AG04449 (cell line): ENCODE measurements at regions of chr2 and their contacts with region 1.

Region 1: DNA sequence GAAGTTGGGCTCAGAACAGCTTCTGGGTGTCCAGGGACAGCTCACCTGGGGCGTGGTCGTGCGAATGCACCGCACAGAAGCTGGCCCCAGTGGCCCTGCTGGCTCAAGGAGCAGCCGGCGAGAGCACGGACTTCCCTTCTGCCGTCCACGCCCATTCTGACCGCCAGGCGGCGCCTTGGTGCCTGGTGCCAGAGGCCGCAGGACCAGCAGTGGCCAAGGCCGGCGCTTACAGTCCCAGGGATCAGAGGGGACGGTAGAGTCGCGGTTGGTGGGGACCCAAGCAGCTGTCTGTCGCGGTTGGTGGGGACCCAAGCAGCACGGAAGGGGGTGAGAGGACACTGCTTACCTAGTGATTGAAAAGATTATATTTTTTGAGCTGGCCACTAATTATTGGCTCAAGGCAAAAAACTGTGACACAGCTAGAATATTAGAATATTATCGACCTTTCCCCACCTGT is 25.7 kb downstream of the NPPC start:
- DNase-seq: no peak
- H3K4me3 ChIP-seq: no peak overlapping the region
- CTCF ChIP-seq: peak; percentile 97

Region 2: DNA sequence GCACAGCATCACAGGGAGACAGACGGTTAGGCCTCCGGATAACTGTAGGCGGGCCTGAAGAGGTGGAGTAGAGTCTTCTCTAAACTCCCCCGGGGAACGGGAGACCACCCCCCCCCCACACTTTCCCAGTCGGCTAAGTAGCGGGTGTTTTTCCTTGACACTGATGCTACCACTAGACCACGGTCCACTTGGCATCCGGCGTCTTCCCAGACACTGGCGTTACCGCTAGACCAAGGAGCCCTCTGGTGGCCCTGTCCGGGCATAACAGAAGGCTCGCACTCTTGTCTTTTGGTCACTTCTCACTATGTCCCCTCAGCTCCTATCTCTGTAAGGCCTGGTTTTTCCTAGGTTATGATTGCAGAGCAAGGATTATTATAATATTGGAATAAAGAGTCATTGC is 410.5 kb before region 1 on chr2:
- CTCF ChIA-PET with region 1: no interaction called
- POLR2A ChIA-PET with region 1: no interaction called
- DNase-seq: no peak
- H3K4me3 ChIP-seq: no peak overlapping the region
- CTCF ChIP-seq: no peak

Region 3: GRCh38 chr2:231701456-231702373 is 198.8 kb before region 1 on chr2:
- CTCF ChIA-PET with region 1: no interaction called
- POLR2A ChIA-PET with region 1: no interaction called
- DNase-seq: no peak
- H3K4me3 ChIP-seq: no peak overlapping the region
- CTCF ChIP-seq: no peak

Region 4: DNA sequence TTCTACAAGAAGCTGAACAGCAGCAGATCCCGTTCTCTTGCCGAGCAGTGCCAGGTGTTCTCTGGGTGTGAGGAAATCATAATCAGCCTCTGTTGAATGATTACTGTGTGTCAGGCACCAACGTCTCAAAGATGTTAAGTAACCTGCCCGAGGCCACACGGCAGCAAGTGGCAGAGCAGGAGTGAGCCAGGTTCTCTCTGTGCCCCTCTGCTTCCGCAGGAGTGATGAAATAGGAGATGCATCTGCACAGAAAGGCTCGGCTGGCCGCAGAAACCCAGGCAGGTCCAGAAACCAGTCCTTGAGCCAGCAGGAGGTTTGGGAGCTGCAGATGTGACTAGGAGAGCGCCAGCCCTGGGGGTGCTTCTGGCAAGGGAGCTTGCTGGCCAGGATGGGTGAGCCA is 45.8 kb before region 1 on chr2:
- CTCF ChIA-PET with region 1: interaction called, 18 read pairs
- POLR2A ChIA-PET with region 1: no interaction called
- DNase-seq: no peak
- H3K4me3 ChIP-seq: no peak overlapping the region
- CTCF ChIP-seq: no peak

Region 5: DNA sequence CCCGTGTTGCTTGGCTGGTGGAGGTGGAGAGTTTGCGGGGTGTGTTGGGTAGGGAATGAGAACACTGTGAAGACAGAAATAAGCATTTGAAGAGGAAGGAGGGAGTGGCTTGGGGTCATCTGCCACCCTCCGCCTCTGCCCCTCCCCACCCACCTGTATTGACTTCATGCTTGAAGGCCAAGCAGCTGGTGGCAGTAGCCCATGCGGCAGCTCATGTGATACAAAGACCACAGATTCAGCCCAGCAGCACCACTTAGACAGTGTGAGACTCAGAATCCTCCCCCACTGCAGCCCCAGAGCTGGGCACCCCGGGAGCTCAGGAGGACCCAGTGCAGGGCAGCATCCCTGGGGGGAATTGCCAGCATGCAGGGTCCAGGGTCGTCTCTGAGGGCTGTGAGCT is 10.3 kb after region 1 on chr2:
- CTCF ChIA-PET with region 1: interaction called, 12 read pairs
- POLR2A ChIA-PET with region 1: no interaction called
- DNase-seq: no peak
- H3K4me3 ChIP-seq: no peak overlapping the region
- CTCF ChIP-seq: no peak

Region 6: DNA sequence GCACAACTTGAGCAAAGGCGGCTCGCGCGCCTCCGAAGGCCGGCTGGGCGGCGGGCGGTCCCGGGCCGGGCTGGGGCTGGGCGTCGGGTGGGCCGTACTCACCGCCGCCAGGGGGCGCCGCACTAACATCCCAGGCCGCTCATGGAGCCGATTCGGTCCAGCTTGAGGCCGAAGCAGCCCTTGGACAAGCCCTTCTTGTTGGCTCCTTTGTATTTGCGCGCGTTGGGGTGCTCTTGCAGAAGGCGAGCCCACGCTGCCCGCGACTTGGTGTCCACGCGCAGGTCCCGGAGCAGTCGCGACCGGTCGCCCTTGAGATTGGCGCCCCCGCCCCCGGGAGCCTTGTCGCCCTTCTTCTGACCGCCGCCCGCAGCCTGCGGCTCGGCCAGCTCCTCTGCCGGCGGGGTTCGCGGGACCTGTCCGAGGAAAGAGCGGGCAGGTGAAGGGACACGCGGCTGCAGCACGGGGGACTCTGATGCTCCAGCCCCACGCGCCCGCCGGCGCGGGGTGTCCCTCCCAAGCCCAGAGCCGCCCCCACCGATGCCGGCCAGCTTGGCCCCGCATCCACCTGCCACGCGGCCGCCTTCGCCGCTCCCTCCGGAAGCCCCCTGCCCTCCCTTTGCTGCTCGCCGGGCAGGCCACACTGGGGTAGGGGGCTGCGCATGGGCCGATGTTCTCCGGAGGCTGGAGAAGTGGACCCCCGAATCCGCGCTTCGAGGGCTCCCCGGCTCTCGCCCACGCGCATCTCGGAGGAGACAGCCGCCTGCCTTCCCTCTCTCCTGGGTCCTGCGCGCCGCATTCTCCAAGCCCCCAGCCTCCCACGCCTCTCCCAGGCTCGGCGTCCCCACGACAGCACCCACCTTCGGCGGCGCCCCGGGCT is 25.0 kb after region 1 on chr2:
- CTCF ChIA-PET with region 1: interaction called, 64 read pairs
- POLR2A ChIA-PET with region 1: no interaction called
- DNase-seq: peak; percentile 28
- H3K4me3 ChIP-seq: peak overlapping the region; percentile 46
- CTCF ChIP-seq: peak; percentile 87

Region 7: GRCh38 chr2:232327105-232328041 is 426.9 kb after region 1 on chr2:
- CTCF ChIA-PET with region 1: interaction called, 222 read pairs
- POLR2A ChIA-PET with region 1: no interaction called
- DNase-seq: no peak
- H3K4me3 ChIP-seq: no peak overlapping the region
- CTCF ChIP-seq: peak; percentile 86

Region 8: GRCh38 chr2:232432598-232433184 is 532.2 kb after region 1 on chr2:
- CTCF ChIA-PET with region 1: interaction called, 29 read pairs
- POLR2A ChIA-PET with region 1: no interaction called
- DNase-seq: no peak
- H3K4me3 ChIP-seq: no peak overlapping the region
- CTCF ChIP-seq: no peak

Region 9: GRCh38 chr2:232444409-232445148 is 544.1 kb after region 1 on chr2:
- CTCF ChIA-PET with region 1: interaction called, 60 read pairs
- POLR2A ChIA-PET with region 1: no interaction called
- DNase-seq: no peak
- H3K4me3 ChIP-seq: no peak overlapping the region
- CTCF ChIP-seq: peak; percentile 75